RWPE1 (cell line): ENCODE measurements at regions of chr12 and their contacts with region 1.

Region 1: GRCh38 chr12:52582971-52583456 is 9.4 kb upstream of the KRT74 start:
- DNase-seq: peak; percentile 90
- H3K27ac ChIP-seq: peak overlapping the region; percentile 92
- CTCF ChIP-seq: peak; percentile 76

Region 2: GRCh38 chr12:52372216-52373154 is 210.5 kb before region 1 on chr12:
- CTCF ChIA-PET with region 1: interaction called, 10 read pairs
- POLR2A ChIA-PET with region 1: no interaction called
- DNase-seq: peak; percentile 90
- H3K27ac ChIP-seq: peak overlapping the region; percentile 53
- CTCF ChIP-seq: peak; percentile 88